Activated T-helper 1 cell treated with anti-CD3 and anti-CD28 coated beads, Interleukin-12 subunit alpha, Interleukin-12 subunit beta, Interleukin-2, Interleukin-4 antibody, amounts not matched to agents 30 ng/mL and 10 ng/mL and 1 ng/mL, durations not matched to agents 14 hours and 24 hours and 36 hours (primary cell): ENCODE measurements at regions of chr5 and their contacts with region 1.

Region 1: DNA sequence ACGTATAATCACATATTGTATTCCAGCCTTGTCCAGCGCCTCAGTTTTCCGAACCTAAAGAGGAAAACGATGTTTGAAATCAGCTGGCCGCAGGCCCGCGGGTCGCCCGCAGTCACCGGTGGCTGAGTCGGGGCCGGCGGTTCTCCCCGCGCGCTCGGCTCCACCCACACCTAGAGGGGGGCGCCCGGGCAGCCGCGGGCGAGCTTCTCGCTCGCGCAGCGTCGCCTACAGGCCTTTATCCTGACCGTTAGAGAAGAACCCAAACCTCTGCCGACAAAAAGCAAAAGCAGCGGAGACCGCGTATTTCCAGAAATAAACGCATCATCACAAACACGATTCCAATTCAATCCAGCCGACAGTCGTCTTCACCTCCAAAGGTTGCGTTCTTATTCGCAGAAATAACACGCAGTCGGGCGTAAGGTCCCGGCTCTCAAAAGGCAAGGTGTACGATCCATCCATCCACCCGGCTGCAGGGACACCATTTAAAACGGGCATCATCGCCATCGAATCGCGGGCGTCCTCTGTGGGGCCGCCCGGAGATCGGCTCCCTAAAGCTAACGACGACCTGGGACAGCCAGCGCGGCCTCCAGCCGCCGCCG is 680 bp upstream of the NIPBL start:
- DNase-seq: peak; percentile 72
- H3K4me3 Mint-ChIP-seq: peak overlapping the region; percentile 93
- H3K27ac Mint-ChIP-seq: peak overlapping the region; percentile 97
- H3K4me1 Mint-ChIP-seq: peaks cover 55% of the 10 kb centered on the region
- H3K27me3 Mint-ChIP-seq: peaks cover 2% of the 10 kb centered on the region

Region 2: DNA sequence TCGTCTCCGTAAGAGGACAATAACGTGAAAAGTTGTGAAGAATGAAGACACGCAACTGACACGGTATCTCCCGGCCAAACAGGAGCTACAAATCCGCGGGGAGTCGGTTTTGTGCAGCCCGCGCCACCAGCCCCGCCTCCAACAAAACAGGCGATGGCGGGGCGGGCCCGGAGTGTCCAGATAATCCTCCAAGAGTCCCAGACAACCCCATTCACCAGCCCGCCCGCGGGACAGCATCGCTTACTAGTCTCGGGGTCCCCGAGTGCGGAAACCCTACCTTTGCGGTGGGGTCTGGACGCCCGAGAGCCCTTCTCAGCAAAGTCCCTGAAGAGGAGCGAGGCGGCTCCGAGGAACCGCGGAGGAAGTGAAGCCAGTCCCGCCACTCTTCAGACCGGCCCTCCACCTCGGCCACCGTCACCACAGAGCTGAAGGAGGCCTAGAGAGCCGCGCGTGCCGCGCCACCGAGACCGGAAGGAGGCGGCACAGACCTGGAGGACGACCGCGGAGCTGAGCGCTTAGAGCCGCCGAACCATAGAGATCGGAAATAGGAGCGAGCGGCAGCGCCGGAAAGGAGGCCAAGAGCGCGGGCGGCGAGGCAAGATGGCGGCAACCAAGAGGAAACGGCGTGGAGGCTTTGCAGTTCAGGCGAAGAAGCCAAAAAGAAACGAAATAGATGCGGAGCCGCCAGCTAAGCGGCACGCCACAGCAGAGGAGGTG is 1960.6 kb before region 1 on chr5 and contains the starts of genes BRIX1 and RAD1:
- intact Hi-C with region 1: loop called (anchors 5 kb)
- DNase-seq: peak; percentile 94
- H3K4me3 Mint-ChIP-seq: no peak within 1 kb of the TSS
- H3K27ac Mint-ChIP-seq: peak within 1 kb of the TSS; percentile 74
- H3K4me1 Mint-ChIP-seq: peaks cover 35% of the 10 kb centered on the region
- H3K27me3 Mint-ChIP-seq: no peaks in the 10 kb centered on the region
- total RNA-seq, gene BRIX1: 110 TPM in 2 replicates
- total RNA-seq, gene RAD1: 45.7 and 47.1 TPM in 2 replicates

Region 3: GRCh38 chr5:36151434-36152323 is 724.2 kb before region 1 on chr5 and contains the starts of genes LMBRD2 and SKP2:
- intact Hi-C with region 1: loop called (anchors 5 kb)
- DNase-seq: peak; percentile 97
- H3K4me3 Mint-ChIP-seq: peak within 1 kb of the TSS; percentile 97
- H3K27ac Mint-ChIP-seq: peak within 1 kb of the TSS; percentile 79
- H3K4me1 Mint-ChIP-seq: peaks cover 59% of the 10 kb centered on the region
- H3K27me3 Mint-ChIP-seq: no peaks in the 10 kb centered on the region
- total RNA-seq, gene LMBRD2: 8.9 and 12.3 TPM in 2 replicates
- total RNA-seq, gene SKP2: 54.6 and 61.2 TPM in 2 replicates

Region 4: GRCh38 chr5:36854402-36855140 is 21.3 kb before region 1 on chr5:
- intact Hi-C with region 1: no loop called
- DNase-seq: no peak
- H3K4me3 Mint-ChIP-seq: no peak overlapping the region
- H3K27ac Mint-ChIP-seq: no peak overlapping the region
- H3K4me1 Mint-ChIP-seq: no peaks in the 10 kb centered on the region
- H3K27me3 Mint-ChIP-seq: peaks cover 14% of the 10 kb centered on the region

Region 5: DNA sequence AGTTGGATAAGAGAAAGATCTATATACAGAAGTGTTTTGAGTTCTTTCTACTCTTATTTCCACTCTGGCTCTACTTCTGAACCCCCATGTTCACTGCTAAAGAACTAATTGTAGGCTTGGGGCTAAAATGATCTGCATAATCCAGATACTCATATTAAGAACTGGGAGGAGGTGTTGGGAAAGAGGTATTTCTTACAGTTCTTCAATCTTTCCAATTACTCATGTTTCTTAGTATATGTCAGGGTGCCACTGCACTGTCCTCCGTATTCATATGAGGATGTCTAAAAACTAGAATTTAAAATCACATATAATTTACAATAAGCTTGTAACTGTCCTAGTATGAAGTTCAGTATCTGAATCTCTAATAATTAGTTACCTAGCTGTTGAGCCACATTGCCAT is 13.4 kb after region 1 on chr5:
- intact Hi-C with region 1: loop called (anchors 1 kb)
- DNase-seq: no peak
- H3K4me3 Mint-ChIP-seq: no peak overlapping the region
- H3K27ac Mint-ChIP-seq: peak overlapping the region; percentile 16
- H3K4me1 Mint-ChIP-seq: peaks cover 39% of the 10 kb centered on the region
- H3K27me3 Mint-ChIP-seq: no peaks in the 10 kb centered on the region

Region 6: DNA sequence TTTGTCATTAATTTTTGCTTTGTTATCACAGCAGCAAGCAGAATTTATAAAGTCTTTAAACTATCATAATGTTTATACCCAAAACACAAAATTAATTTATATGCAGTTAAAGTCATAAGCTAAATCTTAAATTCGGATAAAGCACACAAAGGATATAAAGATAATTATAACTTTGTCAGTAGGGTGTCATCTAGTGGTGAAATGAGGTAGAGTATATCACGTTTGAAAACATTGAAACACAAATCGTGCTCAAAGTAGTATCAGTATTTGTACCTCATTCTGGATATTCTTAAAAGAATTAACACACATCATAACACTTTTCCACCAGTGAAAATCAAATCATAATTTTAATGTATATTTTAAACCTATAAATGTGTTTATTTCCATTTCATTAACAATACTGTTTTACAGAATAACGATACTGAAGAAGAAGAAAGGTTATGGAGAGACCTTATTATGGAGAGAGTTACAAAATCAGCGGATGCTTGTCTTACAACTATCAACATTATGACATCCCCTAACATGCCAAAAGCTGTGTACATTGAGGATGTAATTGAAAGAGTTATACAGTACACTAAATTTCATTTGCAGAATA is 130.2 kb after region 1 on chr5:
- intact Hi-C with region 1: loop called (anchors 5 kb)
- DNase-seq: no peak
- H3K4me3 Mint-ChIP-seq: no peak overlapping the region
- H3K27ac Mint-ChIP-seq: no peak overlapping the region
- H3K4me1 Mint-ChIP-seq: no peaks in the 10 kb centered on the region
- H3K27me3 Mint-ChIP-seq: no peaks in the 10 kb centered on the region

Region 7: GRCh38 chr5:37208883-37209797 is 333.3 kb after region 1 on chr5:
- intact Hi-C with region 1: loop called (anchors 10 kb)
- DNase-seq: peak; percentile 5
- H3K4me3 Mint-ChIP-seq: peak overlapping the region; percentile 83
- H3K27ac Mint-ChIP-seq: peak overlapping the region; percentile 65
- H3K4me1 Mint-ChIP-seq: peaks cover 6% of the 10 kb centered on the region
- H3K27me3 Mint-ChIP-seq: no peaks in the 10 kb centered on the region